ENCODE measurements at regions of chr5 and their contacts with region 1.

Region 1: DNA sequence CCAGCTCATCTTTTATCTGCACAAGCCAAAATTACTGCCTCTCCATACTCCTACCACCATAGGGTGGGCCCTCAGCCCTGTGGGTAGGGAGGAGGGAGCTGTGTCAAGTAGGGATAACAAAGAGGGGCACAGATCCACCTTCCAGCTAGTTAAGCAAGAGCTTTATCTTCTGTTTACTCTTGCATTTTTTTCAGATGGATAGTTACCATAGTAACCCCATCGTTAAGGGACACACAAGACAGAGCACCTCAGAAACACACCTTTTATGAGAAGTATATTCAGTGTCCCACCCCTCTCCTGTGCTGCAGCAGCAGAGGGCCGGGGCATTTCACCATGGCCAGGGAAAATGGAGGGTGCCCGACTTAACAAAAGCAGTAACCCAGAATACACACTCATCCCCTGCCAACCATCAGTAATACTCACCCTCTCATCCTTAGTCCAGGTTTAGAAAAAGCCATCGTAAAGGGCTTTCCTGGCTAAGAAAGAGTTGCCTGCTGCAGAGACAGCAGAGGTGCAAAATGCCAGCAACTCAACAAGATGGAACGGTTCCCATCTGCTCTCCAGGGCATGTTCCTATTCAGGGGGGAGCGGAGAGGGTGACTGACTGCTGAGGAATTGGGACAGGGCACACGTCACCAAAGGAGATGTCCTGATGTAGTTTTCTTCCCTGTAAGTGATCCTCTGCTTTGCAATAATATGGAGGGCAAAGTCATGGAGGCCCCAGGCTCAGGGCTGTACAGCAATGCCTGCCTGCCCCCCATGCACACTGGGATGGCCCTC is 25.1 kb downstream of the MACROH2A1 start:
- DNase-seq: no peak
- H3K4me3 ChIP-seq: no peak overlapping the region
- H3K27ac ChIP-seq: peak overlapping the region; percentile 28 to 70 (median 59)
- H3K4me1 ChIP-seq: peaks cover 50 to 89% (median 80%) of the 10 kb centered on the region in 4 donors
- H3K27me3 ChIP-seq: no peaks in the 10 kb centered on the region
- CTCF ChIP-seq: no peak
- EP300 ChIP-seq: no peak
- POLR2A ChIP-seq: no peak

Region 2: DNA sequence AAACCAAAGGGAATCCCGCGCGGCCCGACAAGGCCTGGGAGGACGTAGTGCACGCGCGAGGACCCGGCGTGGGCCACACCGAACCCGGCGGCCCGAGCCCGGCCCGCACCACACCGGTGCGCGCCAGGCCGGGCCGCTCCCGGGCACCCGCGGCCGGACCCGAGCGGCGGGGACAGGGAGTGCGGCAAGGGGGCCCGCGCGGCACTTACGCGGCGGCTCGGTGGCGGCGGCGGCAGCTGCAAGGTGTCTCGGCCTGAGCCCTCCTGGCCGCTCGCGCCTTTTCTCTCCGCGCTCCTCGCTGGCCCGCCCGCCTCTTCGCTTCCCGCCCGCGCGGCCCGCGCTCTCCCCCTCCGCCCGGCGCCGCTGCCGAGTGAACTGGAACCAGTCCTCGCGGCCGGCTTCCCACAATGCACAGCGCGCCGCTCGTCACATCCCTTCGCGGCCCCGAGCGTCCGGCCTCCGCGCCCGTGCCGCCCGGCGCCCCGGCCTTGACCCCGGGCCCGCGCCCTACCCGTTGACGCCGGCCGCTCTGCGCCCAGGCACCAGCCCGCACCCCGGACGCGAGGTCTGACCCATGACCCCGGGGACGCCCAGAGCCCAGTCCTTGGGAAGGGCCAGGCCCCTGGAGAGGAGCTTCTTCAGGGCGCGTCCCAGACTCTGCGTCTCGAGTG is 25.1 kb after region 1 on chr5 and contains the start of gene MACROH2A1:
- intact Hi-C with region 1: loop called (anchors 2 kb)
- DNase-seq: peak; percentile 95
- H3K4me3 ChIP-seq: peak within 1 kb of the TSS; percentile 85 to 95 (median 94)
- H3K27ac ChIP-seq: peak within 1 kb of the TSS; percentile 90 to 93 (median 92)
- H3K4me1 ChIP-seq: peaks cover 41 to 57% (median 53%) of the 10 kb centered on the region in 4 donors
- H3K27me3 ChIP-seq: no peaks in the 10 kb centered on the region
- CTCF ChIP-seq: peak in 2 of 3 experiments; percentile 19 to 24
- EP300 ChIP-seq: no peak
- POLR2A ChIP-seq: peak; percentile 87
- total RNA-seq, gene MACROH2A1: 144 to 152 (median 149) TPM

Region 3: DNA sequence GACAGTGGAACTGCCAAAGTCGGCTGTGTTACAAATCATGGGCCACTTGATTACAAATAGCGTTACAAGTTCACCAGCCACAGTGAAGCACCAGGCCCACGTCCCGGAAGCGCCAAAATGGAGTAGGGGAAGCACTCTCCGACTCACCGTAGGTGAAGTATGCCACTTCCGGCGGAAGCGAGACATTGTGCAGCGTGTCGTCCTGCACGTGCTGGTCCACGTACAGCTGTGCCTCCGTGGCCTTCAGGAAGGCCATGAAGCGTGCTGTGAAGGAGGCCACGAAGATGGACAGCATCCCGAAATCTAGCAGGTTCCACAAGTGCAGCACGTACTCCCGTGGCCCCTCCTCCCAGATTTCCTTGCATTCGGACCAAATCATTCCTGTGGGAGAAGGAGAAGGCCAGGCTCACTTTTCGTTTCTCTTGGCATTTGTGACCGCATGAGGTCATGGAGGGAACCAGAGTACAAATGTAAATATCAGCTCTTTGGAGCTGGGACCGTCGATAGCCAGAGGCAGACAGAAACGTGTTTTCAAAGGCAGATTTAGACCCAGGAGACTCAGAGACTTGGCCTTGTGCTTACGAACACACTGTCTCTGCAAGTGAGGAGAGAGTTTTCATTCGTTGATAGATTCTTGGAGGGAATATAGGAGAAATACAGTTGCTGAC is 877.7 kb after region 1 on chr5:
- intact Hi-C with region 1: no loop called
- DNase-seq: no peak
- H3K4me3 ChIP-seq: no peak overlapping the region
- H3K27ac ChIP-seq: no peak overlapping the region
- H3K4me1 ChIP-seq: no peaks in the 10 kb centered on the region
- H3K27me3 ChIP-seq: no peaks in the 10 kb centered on the region
- CTCF ChIP-seq: no peak
- EP300 ChIP-seq: no peak
- POLR2A ChIP-seq: no peak